ENCODE measurements at regions of chr12 and their contacts with region 1.

Region 1: DNA sequence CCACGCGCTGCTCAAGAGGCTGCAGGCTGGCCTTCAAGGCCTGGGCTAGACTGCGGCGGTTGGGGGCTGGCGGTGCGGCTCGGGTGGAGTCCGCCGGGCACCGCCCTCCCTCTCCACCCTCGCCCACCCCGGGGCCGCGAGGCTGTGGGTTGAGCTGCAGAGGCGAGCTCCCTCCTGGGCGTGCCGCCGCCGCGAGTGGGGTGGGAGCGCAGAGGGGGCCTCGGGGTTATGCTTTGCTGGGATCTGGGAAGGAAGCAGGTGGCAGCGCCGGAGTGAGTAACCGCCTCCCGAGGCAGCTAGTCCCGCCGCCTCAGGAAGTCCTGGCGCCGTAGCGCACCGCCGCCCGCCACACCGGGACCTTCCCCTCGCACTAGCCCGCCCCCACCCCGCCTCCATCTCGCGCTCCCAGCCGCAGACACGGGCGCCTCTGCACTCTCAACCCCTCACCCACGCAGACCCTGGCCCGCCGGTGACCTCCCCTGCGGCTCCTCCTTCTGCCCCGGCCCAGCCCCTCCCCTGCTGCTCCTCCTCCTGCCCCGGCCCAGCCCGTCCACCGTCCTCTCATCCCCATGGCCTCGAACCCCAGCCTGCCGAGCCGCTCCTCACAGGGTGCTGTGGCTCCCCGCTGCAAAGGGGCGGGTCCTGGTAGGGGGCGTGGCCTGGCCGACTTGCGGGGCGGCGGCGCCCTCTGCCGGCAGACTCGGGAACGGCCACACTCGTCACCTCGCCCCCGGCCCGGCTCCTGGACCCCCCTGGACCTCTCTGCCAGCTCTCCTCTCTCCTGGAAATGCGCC is 16.6 kb downstream of the TAMALIN start:
- DNase-seq: peak; percentile 89 to 95
- H3K4me3 ChIP-seq: peak overlapping the region; percentile 75
- H3K4me3 Mint-ChIP-seq: peak overlapping the region; percentile 90
- H3K27ac Mint-ChIP-seq: no peak overlapping the region
- H3K4me1 ChIP-seq: peaks cover 12% of the 10 kb centered on the region; the same call in 1 of the 2 replicates
- H3K4me1 Mint-ChIP-seq: peaks cover 33% of the 10 kb centered on the region
- H3K27me3 ChIP-seq: no peaks in the 10 kb centered on the region
- H3K27me3 Mint-ChIP-seq: no peaks in the 10 kb centered on the region
- CTCF ChIP-seq: peak; percentile 96

Region 2: DNA sequence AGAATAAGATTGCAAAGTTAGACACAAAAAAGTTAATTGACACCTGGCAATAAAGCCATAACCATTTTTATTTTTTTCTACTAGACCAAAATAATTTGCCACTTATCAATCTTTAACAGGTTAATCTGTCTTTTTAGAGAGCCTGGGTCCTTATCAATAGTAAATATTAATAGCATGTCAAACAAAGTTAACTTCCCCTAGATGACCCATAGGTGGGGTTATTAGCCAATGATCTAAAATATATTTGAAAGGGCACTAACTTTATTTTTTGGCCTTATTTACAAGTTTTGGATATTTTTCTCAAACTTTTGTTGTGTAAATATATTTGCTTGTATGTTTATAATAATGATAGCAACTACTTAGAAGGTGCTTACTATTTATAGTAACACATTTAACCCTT is 131.5 kb before region 1 on chr12:
- CTCF ChIA-PET with region 1: interaction called, 51 read pairs
- POLR2A ChIA-PET with region 1: interaction called, 3 read pairs
- intact Hi-C with region 1: loop called (anchors 1 kb)
- DNase-seq: no peak
- H3K4me3 ChIP-seq: no peak overlapping the region
- H3K4me3 Mint-ChIP-seq: no peak overlapping the region
- H3K27ac Mint-ChIP-seq: no peak overlapping the region
- H3K4me1 ChIP-seq: peaks cover 13% of the 10 kb centered on the region; the same call in 1 of the 2 replicates
- H3K4me1 Mint-ChIP-seq: peaks cover 7% of the 10 kb centered on the region
- H3K27me3 ChIP-seq: no peaks in the 10 kb centered on the region
- H3K27me3 Mint-ChIP-seq: no peaks in the 10 kb centered on the region
- CTCF ChIP-seq: peak; percentile 54 to 56

Region 3: GRCh38 chr12:51994959-51995358 is 28.4 kb before region 1 on chr12:
- CTCF ChIA-PET with region 1: interaction called, 30 read pairs
- POLR2A ChIA-PET with region 1: no interaction called
- intact Hi-C with region 1: loop called (anchors 1 kb)
- DNase-seq: no peak
- H3K4me3 ChIP-seq: no peak overlapping the region
- H3K4me3 Mint-ChIP-seq: no peak overlapping the region
- H3K27ac Mint-ChIP-seq: no peak overlapping the region
- H3K4me1 ChIP-seq: no peaks in the 10 kb centered on the region
- H3K4me1 Mint-ChIP-seq: peaks cover 6% of the 10 kb centered on the region
- H3K27me3 ChIP-seq: no peaks in the 10 kb centered on the region
- H3K27me3 Mint-ChIP-seq: no peaks in the 10 kb centered on the region
- CTCF ChIP-seq: no peak

Region 4: GRCh38 chr12:52044261-52044983 is 21.0 kb after region 1 on chr12:
- CTCF ChIA-PET with region 1: interaction called, 15 read pairs
- POLR2A ChIA-PET with region 1: no interaction called
- intact Hi-C with region 1: no loop called
- DNase-seq: no peak
- H3K4me3 ChIP-seq: no peak overlapping the region
- H3K4me3 Mint-ChIP-seq: no peak overlapping the region
- H3K27ac Mint-ChIP-seq: no peak overlapping the region
- H3K4me1 ChIP-seq: peaks cover 11% of the 10 kb centered on the region
- H3K4me1 Mint-ChIP-seq: peaks cover 21% of the 10 kb centered on the region
- H3K27me3 ChIP-seq: no peaks in the 10 kb centered on the region
- H3K27me3 Mint-ChIP-seq: no peaks in the 10 kb centered on the region
- CTCF ChIP-seq: no peak

Region 5: DNA sequence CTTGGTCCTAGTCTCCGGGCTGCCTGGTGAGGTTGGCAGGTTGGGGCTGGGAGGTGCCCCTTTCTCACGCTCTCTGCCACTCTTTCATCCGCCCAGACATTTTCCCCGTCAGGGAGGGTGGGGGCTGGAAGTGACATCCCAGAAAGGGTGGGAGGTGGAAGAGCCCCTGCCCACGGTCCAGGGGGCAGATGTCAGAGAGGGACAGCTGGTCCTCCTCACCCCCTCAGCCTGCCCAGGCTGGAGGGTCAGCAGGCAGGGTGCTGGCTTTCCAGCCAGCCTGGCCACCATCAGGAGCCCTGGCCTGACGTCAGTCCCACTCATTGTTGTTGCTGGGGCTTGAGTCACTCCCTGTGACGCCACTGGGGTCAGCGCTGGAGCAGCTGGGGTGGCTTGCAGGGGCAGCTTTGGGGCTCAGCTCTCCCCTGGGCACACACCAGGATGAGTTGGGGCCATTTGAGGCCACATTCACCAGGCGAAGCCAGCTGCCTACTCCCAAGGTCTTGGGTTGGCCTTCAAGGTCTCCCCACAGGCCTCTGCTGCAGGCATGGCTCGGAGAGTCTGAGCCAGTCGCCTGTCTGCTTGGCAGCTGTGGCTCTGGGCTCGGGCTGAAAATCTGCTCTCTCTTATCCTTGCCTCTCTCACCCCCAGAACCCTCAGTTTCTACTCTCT is 40.7 kb after region 1 on chr12:
- CTCF ChIA-PET with region 1: interaction called, 84 read pairs
- POLR2A ChIA-PET with region 1: interaction called, 8 read pairs
- intact Hi-C with region 1: loop called (anchors 1 kb)
- DNase-seq: no peak
- H3K4me3 ChIP-seq: no peak overlapping the region
- H3K4me3 Mint-ChIP-seq: no peak overlapping the region
- H3K27ac Mint-ChIP-seq: no peak overlapping the region
- H3K4me1 ChIP-seq: no peaks in the 10 kb centered on the region
- H3K4me1 Mint-ChIP-seq: no peaks in the 10 kb centered on the region
- H3K27me3 ChIP-seq: no peaks in the 10 kb centered on the region
- H3K27me3 Mint-ChIP-seq: no peaks in the 10 kb centered on the region
- CTCF ChIP-seq: no peak

Region 6: GRCh38 chr12:52087961-52088820 is 64.8 kb after region 1 on chr12:
- CTCF ChIA-PET with region 1: interaction called, 102 read pairs
- POLR2A ChIA-PET with region 1: interaction called, 3 read pairs
- intact Hi-C with region 1: loop called (anchors 1 kb)
- DNase-seq: no peak
- H3K4me3 ChIP-seq: no peak overlapping the region
- H3K4me3 Mint-ChIP-seq: no peak overlapping the region
- H3K27ac Mint-ChIP-seq: no peak overlapping the region
- H3K4me1 ChIP-seq: peaks cover 12% of the 10 kb centered on the region
- H3K4me1 Mint-ChIP-seq: peaks cover 16% of the 10 kb centered on the region
- H3K27me3 ChIP-seq: no peaks in the 10 kb centered on the region
- H3K27me3 Mint-ChIP-seq: peaks cover 7% of the 10 kb centered on the region
- CTCF ChIP-seq: no peak

Region 7: DNA sequence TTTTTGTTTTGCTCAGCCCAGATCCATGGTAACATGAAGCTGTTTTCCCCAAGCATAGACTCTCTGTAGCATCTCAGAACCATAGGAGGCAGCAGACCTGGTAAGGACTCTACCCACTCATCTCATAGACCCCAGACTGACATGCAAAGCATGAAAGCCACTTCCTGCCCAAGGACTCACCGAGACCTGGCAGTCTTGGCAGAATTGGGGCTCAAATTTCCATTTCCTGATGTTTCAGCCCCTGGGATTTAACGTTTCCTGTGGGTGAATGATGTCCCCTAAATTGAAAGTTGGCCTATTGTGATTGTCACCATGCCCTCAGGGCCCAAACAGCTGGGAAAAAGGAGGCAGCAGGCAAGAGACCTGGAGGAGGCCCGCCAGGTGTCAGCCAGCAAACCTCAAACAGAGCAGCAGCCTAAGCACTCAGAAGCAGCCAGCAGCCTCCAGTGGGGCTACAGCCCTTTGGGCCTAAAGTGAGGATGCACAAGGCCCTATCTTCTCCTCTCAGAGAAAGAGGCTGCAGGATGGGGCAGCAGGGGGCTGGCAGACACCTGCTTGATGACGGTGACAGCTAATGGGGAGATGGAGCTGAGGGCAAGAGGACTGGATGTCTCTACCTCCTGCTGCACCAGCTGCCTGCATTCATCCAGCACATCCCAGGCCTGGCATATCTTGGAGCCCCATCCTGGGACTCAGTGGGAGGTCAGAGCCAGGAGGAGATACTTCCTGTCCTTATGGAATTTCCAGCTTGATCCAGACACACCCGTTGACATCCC is 335.4 kb after region 1 on chr12:
- CTCF ChIA-PET with region 1: no interaction called
- POLR2A ChIA-PET with region 1: no interaction called
- intact Hi-C with region 1: no loop called
- DNase-seq: peak in 1 of 2 experiments; percentile 3
- H3K4me3 ChIP-seq: no peak overlapping the region
- H3K4me3 Mint-ChIP-seq: no peak overlapping the region
- H3K27ac Mint-ChIP-seq: no peak overlapping the region
- H3K4me1 ChIP-seq: no peaks in the 10 kb centered on the region
- H3K4me1 Mint-ChIP-seq: no peaks in the 10 kb centered on the region
- H3K27me3 ChIP-seq: no peaks in the 10 kb centered on the region
- H3K27me3 Mint-ChIP-seq: peaks cover 4% of the 10 kb centered on the region
- CTCF ChIP-seq: no peak